ENCODE measurements at regions of chr5 and their contacts with region 1.

Region 1: DNA sequence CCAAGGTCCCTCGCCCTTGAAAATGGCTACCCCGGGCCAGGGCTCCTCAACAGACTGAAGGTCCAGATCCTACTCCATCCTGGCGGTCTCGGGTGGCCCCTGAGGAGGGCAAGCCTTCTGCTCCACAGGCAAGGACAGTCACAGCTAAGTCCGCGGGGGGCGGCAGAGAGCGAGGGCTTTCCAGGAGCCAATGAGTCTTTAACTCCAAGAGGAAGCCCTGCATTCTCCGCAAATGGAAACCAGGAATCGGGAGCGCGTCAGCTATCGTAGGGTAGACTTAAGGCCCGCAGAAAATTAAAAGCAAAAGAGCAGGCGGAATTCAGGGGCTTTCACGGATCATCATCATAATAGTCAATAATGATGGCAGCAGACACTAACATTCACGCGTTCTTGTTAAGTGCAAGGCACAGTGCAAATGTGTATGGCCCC is 87.8 kb upstream of the TNFAIP8 start:
- DNase-seq: peak; percentile 59 to 93 (median 74)
- ATAC-seq: peak; percentile 76
- H3K4me3 ChIP-seq: peak overlapping the region; percentile 69
- H3K4me3 Mint-ChIP-seq: peak overlapping the region; percentile 99
- H3K27ac ChIP-seq: peak overlapping the region; percentile 89 to 92
- H3K27ac Mint-ChIP-seq: peak overlapping the region; percentile 97
- H3K4me1 ChIP-seq: peaks cover 27% of the 10 kb centered on the region
- H3K4me1 Mint-ChIP-seq: peaks cover 76% of the 10 kb centered on the region
- H3K27me3 ChIP-seq: no peaks in the 10 kb centered on the region
- H3K27me3 Mint-ChIP-seq: no peaks in the 10 kb centered on the region
- CTCF ChIP-seq: peak; percentile 70

Region 2: DNA sequence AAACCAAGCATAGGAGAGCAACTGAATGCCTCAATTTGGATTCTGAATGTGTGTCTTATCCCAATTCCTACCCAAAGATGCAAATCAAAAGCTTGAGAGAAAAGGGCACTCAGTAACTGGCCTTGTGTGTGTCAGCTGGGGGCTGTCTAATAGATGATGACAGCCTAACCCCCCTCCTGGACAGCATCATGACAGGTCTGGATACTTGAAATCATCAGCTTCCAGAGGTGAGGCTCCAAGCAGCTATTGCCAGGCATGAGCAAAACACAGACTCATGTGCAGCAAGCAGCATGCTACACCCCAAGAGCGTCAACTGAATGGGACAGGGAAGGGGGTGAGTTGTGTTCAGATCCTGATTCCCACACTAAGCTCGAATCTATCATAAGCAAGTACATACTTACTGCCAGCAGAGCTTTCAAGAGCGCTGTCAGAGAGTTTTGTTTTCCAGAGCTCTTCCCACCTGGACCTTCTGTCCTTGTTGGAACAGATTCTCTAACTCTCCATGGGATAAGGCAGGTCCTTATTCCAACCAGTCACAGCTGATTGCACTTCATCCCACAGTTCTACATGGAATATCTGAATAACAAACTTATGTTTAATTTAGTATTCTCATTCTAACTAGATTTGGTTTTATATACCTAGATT is 747.1 kb before region 1 on chr5:
- CTCF ChIA-PET with region 1: no interaction called
- POLR2A ChIA-PET with region 1: no interaction called
- intact Hi-C with region 1: no loop called
- DNase-seq: no peak
- ATAC-seq: no peak
- H3K4me3 ChIP-seq: no peak overlapping the region
- H3K4me3 Mint-ChIP-seq: no peak overlapping the region
- H3K27ac ChIP-seq: no peak overlapping the region
- H3K27ac Mint-ChIP-seq: no peak overlapping the region
- H3K4me1 ChIP-seq: no peaks in the 10 kb centered on the region
- H3K4me1 Mint-ChIP-seq: no peaks in the 10 kb centered on the region
- H3K27me3 ChIP-seq: no peaks in the 10 kb centered on the region
- H3K27me3 Mint-ChIP-seq: no peaks in the 10 kb centered on the region
- CTCF ChIP-seq: no peak

Region 3: DNA sequence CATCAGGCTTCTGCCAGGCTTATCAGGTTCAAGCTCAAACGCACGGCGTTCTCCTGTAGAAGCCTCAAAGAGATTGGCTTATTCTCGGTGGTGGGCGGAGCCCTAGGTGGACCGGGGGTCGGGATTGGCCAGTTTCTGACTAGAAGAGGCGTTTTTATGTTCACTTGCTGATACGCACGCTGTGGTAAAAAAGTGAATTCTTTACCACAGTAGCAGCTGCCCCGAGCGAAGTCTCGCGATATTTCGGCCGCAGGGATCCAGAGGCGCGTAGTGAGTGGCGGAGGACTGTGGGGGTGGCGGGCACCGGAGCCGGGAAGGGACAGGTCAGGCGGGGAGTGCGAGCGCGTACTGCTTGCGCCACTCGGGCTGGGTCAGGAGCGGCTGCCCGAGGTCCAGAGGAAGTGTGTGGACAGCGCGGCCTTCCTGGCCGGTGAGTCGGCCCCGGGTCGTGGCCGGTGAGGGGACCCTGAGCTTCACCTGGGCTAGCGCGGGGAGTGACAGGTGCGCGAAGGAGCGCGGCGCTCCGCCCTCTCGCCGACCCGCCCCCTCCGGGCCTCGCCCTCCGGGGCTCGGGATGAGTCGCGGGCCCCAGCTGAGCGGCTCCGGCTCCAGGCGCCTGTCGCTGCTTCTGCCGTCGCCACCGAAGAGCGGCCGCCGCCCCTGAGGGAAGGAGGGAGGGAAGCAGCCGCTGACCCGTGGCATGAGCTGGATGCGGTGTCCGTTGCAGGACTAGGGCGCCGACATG is 197.0 kb before region 1 on chr5 and contains the start of gene DMXL1:
- CTCF ChIA-PET with region 1: no interaction called
- POLR2A ChIA-PET with region 1: interaction called, 21 read pairs
- intact Hi-C with region 1: loop called (anchors 5 kb)
- DNase-seq: peak; percentile 96 to 99 (median 98)
- ATAC-seq: peak; percentile 82
- H3K4me3 ChIP-seq: peak within 1 kb of the TSS; percentile 81
- H3K4me3 Mint-ChIP-seq: peak within 1 kb of the TSS; percentile 100
- H3K27ac ChIP-seq: peak within 1 kb of the TSS; percentile 90 to 94
- H3K27ac Mint-ChIP-seq: peak within 1 kb of the TSS; percentile 98
- H3K4me1 ChIP-seq: peaks cover 19% of the 10 kb centered on the region
- H3K4me1 Mint-ChIP-seq: peaks cover 46% of the 10 kb centered on the region
- H3K27me3 ChIP-seq: no peaks in the 10 kb centered on the region
- H3K27me3 Mint-ChIP-seq: no peaks in the 10 kb centered on the region
- CTCF ChIP-seq: no peak
- total RNA-seq, gene DMXL1: 28.4 to 29.1 TPM

Region 4: GRCh38 chr5:119153629-119154028 is 114.3 kb before region 1 on chr5:
- CTCF ChIA-PET with region 1: no interaction called
- POLR2A ChIA-PET with region 1: no interaction called
- intact Hi-C with region 1: no loop called
- DNase-seq: no peak
- ATAC-seq: no peak
- H3K4me3 ChIP-seq: no peak overlapping the region
- H3K4me3 Mint-ChIP-seq: no peak overlapping the region
- H3K27ac ChIP-seq: no peak overlapping the region
- H3K27ac Mint-ChIP-seq: no peak overlapping the region
- H3K4me1 ChIP-seq: no peaks in the 10 kb centered on the region
- H3K4me1 Mint-ChIP-seq: no peaks in the 10 kb centered on the region
- H3K27me3 ChIP-seq: no peaks in the 10 kb centered on the region
- H3K27me3 Mint-ChIP-seq: no peaks in the 10 kb centered on the region
- CTCF ChIP-seq: no peak

Region 5: GRCh38 chr5:119290161-119290569 is 22.2 kb after region 1 on chr5:
- CTCF ChIA-PET with region 1: interaction called, 3 read pairs
- POLR2A ChIA-PET with region 1: interaction called, 30 read pairs
- intact Hi-C with region 1: loop called in 1 of 2 experiments (anchors 2 kb)
- DNase-seq: peak in 4 of 14 experiments; percentile 23 to 69 (median 66)
- ATAC-seq: peak; percentile 28
- H3K4me3 ChIP-seq: peak overlapping the region; percentile 28
- H3K4me3 Mint-ChIP-seq: peak overlapping the region; percentile 76
- H3K27ac ChIP-seq: peak overlapping the region; percentile 68 to 89
- H3K27ac Mint-ChIP-seq: peak overlapping the region; percentile 97
- H3K4me1 ChIP-seq: peaks cover 42% of the 10 kb centered on the region
- H3K4me1 Mint-ChIP-seq: peaks cover 83% of the 10 kb centered on the region
- H3K27me3 ChIP-seq: no peaks in the 10 kb centered on the region
- H3K27me3 Mint-ChIP-seq: no peaks in the 10 kb centered on the region
- CTCF ChIP-seq: no peak

Region 6: GRCh38 chr5:119309326-119309725 is 41.4 kb after region 1 on chr5:
- CTCF ChIA-PET with region 1: no interaction called
- POLR2A ChIA-PET with region 1: interaction called, 116 read pairs
- intact Hi-C with region 1: loop called (anchors 2 kb)
- DNase-seq: peak in 3 of 14 experiments; percentile 23 to 52 (median 40)
- ATAC-seq: peak; percentile 39
- H3K4me3 ChIP-seq: peak overlapping the region; percentile 19
- H3K4me3 Mint-ChIP-seq: peak overlapping the region; percentile 82
- H3K27ac ChIP-seq: peak overlapping the region; percentile 63 to 71
- H3K27ac Mint-ChIP-seq: peak overlapping the region; percentile 95
- H3K4me1 ChIP-seq: peaks cover 70% of the 10 kb centered on the region
- H3K4me1 Mint-ChIP-seq: peaks cover 96% of the 10 kb centered on the region
- H3K27me3 ChIP-seq: no peaks in the 10 kb centered on the region
- H3K27me3 Mint-ChIP-seq: no peaks in the 10 kb centered on the region
- CTCF ChIP-seq: no peak

Region 7: DNA sequence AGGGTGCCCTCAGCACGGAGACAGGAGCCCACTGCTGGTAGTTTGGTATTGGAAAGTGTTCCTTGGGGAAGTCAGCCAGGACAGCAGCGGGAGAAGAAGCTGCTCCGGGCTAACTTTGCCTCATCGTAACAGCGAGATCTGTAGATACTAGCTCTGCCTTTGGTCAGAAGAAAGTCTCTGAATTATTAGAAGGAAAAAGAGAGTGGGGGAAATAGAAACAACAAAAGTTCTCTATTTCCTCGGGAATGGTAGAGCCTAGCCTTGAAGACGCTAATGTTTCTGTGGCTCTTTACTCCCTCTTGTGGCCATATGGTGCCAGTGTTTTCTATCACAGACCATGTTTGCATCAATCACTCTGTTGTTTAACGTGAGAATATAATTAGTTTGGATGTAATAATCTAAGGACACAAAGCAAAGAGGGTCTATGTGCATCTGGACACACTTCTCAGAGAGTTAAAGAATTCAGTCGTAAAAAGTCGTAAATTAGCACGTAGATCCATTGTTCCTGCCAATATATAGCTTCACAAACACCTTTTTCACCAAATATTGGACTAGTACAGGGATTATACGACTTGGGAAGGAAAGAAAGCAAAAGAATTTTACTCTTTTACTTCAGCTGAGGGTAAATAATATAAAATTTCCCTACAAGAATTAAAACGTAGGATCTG is 144.1 kb after region 1 on chr5:
- CTCF ChIA-PET with region 1: interaction called, 10 read pairs
- POLR2A ChIA-PET with region 1: interaction called, 6 read pairs
- intact Hi-C with region 1: loop called (anchors 2 to 5 kb)
- DNase-seq: peak in 13 of 14 experiments; percentile 11 to 87 (median 43)
- ATAC-seq: peak; percentile 94
- H3K4me3 ChIP-seq: peak overlapping the region; percentile 62
- H3K4me3 Mint-ChIP-seq: peak overlapping the region; percentile 85
- H3K27ac ChIP-seq: no peak overlapping the region
- H3K27ac Mint-ChIP-seq: peak overlapping the region; percentile 31
- H3K4me1 ChIP-seq: peaks cover 8% of the 10 kb centered on the region
- H3K4me1 Mint-ChIP-seq: peaks cover 20% of the 10 kb centered on the region
- H3K27me3 ChIP-seq: no peaks in the 10 kb centered on the region
- H3K27me3 Mint-ChIP-seq: no peaks in the 10 kb centered on the region
- CTCF ChIP-seq: peak; percentile 92

Region 8: GRCh38 chr5:119564325-119564724 is 296.4 kb after region 1 on chr5:
- CTCF ChIA-PET with region 1: no interaction called
- POLR2A ChIA-PET with region 1: no interaction called
- intact Hi-C with region 1: no loop called
- DNase-seq: no peak
- ATAC-seq: no peak
- H3K4me3 ChIP-seq: no peak overlapping the region
- H3K4me3 Mint-ChIP-seq: no peak overlapping the region
- H3K27ac ChIP-seq: no peak overlapping the region
- H3K27ac Mint-ChIP-seq: no peak overlapping the region
- H3K4me1 ChIP-seq: no peaks in the 10 kb centered on the region
- H3K4me1 Mint-ChIP-seq: no peaks in the 10 kb centered on the region
- H3K27me3 ChIP-seq: no peaks in the 10 kb centered on the region
- H3K27me3 Mint-ChIP-seq: peaks cover 14% of the 10 kb centered on the region
- CTCF ChIP-seq: no peak